Posterior vena cava (tissue), 2 donors: ENCODE measurements at regions of chrX and their contacts with region 1.

Region 1: DNA sequence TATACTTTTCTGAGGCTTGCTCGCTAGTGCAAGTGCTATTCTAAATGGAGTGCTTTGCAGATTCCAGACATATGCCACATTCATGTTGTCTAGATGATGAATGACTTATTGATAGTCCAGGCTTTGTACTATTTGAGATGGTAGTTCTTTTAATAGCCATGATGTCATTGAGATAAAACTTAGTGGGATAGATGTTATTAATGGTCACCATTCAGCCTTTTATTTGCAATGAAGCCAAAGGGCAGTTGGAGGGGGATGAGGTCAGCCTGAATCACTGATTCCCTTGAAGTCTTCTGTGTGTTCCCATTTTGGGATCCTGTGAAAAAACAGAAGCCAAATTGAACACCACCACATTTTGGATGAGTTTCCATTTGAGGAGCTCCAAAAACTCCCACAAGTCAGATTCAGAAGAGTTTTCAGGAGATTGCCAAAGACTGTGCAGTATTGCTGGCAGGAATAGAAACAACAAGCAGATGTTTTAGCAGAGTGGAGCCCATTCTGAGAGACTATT is 184.1 kb downstream of the IL1RAPL2 start:
- DNase-seq: no peak

Region 2: DNA sequence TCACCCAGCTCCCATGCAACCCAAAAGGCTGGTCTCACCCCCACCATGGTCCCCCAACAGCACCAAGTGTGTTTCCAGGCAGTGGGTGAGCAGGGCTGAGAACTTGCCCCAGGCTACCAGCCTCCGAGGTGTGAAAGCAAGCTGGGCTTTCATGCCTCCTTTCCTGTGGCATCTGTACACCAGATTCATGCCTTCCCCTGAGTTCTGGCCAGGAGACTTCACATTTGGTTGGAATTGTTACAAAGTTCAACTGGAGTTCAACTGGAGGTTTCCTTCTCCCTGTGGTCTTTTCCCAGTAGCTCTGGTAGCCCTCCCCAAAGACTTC is 1890.6 kb before region 1 on chrX:
- intact Hi-C with region 1: loop called in 1 of 2 experiments (anchors 10 kb)
- DNase-seq: no peak